HEK293 (cell line): ENCODE measurements at regions of chr6 and their contacts with region 1.

Region 1: GRCh38 chr6:30616811-30617564 is at the start of gene PPP1R10:
- H3K4me3 ChIP-seq: peak within 1 kb of the TSS; percentile 91
- H3K27ac ChIP-seq: peak within 1 kb of the TSS; percentile 88
- H3K4me1 ChIP-seq: peaks cover 18% of the 10 kb centered on the region
- CTCF ChIP-seq: 0 out of 2 replicates have a peak, but pooled peaks have one; percentile 17

Region 2: DNA sequence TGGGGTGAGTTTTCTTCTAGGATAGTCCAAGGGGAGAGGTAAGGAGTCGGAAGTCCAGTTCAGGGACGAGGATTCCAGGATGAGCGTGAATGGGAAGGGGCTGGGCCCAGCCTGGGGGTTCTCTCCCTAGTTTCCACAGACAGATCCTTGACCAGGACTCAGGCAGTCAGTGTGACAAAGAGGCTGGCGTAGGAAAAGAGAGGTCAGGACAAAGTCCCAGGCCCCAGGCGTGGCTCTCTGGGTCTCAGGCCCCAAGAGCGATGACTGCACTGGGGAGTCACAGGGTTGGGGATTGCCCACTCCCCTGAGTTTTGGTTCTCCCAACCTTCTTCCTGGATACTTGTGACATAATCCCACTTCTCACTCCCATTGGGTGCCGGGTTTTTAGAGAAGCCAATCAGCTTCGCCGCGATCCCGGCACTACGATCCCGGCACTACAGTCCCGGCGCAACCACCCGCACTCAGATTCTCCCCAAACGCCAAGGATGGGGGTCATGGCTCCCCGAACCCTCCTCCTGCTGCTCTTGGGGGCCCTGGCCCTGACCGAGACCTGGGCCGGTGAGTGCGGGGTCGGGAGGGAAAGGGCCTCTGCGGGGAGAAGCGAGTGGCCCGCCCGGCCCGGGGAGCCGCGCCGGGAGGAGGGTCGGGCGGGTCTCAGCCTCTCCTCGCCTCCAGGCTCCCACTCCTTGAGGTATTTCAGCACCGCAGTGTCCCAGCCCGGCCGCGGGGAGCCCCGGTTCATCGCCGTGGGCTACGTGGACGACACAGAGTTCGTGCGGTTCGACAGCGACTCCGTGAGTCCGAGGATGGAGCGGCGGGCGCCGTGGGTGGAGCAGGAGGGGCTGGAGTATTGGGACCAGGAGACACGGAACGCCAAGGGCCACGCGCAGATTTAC is 357.6 kb before region 1 on chr6:
- CTCF ChIA-PET with region 1: no interaction called
- POLR2A ChIA-PET with region 1: no interaction called
- H3K4me3 ChIP-seq: peak overlapping the region; percentile 79
- H3K27ac ChIP-seq: peak overlapping the region; percentile 25; the same call in 1 of the 2 replicates
- H3K4me1 ChIP-seq: peaks cover 8% of the 10 kb centered on the region; the same call in 1 of the 2 replicates
- CTCF ChIP-seq: peak; percentile 85

Region 3: GRCh38 chr6:30447237-30447636 is 169.8 kb before region 1 on chr6:
- CTCF ChIA-PET with region 1: no interaction called
- POLR2A ChIA-PET with region 1: no interaction called
- H3K4me3 ChIP-seq: no peak overlapping the region
- H3K27ac ChIP-seq: no peak overlapping the region
- H3K4me1 ChIP-seq: 0 out of 2 replicates have a peak, but pooled peaks cover 3% of the 10 kb centered on the region
- CTCF ChIP-seq: peak; percentile 34

Region 4: DNA sequence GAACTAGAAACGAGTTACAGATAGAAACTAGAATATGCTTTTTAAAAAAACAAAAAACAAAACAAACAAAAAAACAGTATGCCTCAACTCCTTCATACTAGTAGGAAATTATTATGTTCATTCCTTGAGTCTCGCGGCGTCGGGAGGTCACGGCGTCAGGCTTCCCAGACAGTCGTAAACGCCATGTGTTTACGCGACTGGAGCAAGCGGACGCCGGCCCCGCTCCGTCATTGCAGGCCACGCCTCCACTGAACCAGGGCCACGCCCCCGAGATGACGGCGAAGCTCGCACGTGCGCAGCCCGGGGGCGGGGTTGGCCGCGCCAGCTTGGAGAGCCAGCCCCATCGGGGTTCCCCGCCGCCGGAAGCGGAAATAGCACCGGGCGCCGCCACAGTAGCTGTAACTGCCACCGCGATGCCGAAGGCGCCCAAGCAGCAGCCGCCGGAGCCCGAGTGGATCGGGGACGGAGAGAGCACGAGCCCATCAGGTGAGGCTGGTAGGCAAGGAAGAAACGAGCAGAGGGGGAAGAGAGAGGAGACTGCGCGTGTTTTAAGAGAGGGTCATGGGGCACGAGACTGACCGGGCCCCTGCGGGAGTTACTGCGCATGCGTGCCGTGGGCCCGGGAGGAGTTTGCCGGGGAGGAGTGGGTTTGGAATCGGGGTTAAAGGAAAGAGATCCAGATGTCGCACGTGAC is 45.8 kb before region 1 on chr6 and contains the start of gene ABCF1:
- CTCF ChIA-PET with region 1: no interaction called
- POLR2A ChIA-PET with region 1: interaction called, 23 read pairs
- H3K4me3 ChIP-seq: peak within 1 kb of the TSS; percentile 94
- H3K27ac ChIP-seq: peak within 1 kb of the TSS; percentile 64
- H3K4me1 ChIP-seq: peaks cover 9% of the 10 kb centered on the region; the same call in 1 of the 2 replicates
- CTCF ChIP-seq: no peak

Region 5: DNA sequence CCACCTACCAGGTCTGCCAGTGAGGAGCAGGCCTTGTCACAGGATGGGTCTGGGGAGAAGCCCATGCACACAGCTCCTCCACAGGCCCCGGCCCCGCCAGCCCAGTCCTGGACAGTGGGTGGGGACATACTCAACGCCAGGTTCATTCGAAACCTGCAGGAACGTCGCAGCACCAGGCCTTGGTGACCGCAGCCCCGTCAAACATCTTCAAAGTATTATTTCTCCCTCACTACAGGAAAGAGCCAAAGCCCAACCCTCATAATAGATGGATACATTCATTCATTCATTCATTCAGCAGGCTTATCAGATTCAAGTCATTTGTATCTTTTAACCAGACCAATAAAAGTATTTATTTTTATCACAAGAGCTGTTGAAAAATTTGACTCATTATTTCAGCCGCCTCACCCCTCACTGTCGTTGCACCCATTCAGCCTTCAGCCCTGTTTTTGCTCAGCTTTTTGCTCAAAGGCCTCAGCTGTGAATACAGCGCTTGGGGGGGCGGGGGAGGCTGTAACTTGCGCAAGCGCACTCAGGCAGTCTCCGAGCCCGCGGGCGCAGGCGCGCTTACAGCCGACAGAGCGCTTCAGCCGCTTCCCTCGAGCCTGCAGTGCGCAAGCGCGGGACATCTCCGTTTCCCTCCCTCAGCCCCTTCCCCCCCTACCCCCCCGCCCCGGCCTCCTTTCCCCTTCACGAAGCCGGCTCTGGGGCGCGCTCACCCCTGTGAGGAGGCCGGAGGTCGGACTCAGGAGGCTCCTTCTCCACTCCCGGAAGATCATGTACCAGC is 29.7 kb after region 1 on chr6 and contains the start of gene C6orf136:
- CTCF ChIA-PET with region 1: interaction called, 3 read pairs
- POLR2A ChIA-PET with region 1: interaction called, 20 read pairs
- H3K4me3 ChIP-seq: peak within 1 kb of the TSS; percentile 88
- H3K27ac ChIP-seq: peak within 1 kb of the TSS; percentile 96
- H3K4me1 ChIP-seq: peaks cover 8% of the 10 kb centered on the region
- CTCF ChIP-seq: no peak

Region 6: GRCh38 chr6:30717042-30717844 is 100.3 kb after region 1 on chr6 and contains the start of gene MDC1:
- CTCF ChIA-PET with region 1: interaction called, 16 read pairs
- POLR2A ChIA-PET with region 1: interaction called, 51 read pairs
- H3K4me3 ChIP-seq: peak within 1 kb of the TSS; percentile 72
- H3K27ac ChIP-seq: peak within 1 kb of the TSS; percentile 88
- H3K4me1 ChIP-seq: peaks cover 6% of the 10 kb centered on the region
- CTCF ChIP-seq: peak; percentile 86

Region 7: GRCh38 chr6:30790760-30791271 is 173.8 kb after region 1 on chr6:
- CTCF ChIA-PET with region 1: no interaction called
- POLR2A ChIA-PET with region 1: no interaction called
- H3K4me3 ChIP-seq: no peak overlapping the region
- H3K27ac ChIP-seq: no peak overlapping the region
- H3K4me1 ChIP-seq: no peaks in the 10 kb centered on the region
- CTCF ChIP-seq: no peak

Region 8: DNA sequence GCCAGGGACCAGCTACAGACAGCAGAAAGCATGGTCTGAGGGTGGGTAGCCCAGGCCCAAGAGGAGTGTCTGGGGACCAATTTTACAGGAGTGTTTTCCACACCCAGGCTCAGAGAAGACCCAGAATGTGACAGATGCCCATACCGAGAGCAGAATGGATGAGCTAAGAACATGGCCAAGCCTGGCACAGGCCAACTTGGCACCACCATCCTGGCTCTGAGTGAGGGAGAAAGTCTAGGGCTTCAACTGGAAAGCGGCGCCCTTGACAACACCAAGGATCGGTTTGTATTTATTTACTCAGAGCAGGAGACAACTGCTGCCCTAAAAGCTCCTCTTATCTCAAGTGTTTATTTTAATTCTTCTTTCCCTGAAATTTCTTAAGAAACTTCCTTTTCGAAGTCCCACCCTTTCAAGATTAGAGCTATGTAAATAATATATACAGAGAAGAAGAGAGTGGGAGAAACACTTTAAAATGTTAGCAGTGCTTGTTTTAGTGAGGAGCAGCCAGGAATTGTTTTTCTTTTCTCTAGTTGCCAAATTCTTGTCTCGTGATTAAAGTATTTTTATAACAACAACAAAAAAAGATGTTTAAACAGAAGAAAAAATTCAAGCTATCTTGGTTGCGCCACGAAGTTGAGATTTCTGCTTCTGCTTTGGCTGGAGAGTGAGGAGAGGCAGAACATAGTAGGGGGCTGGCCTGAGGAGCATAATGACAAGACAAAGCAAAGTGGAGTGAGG is 1475.9 kb after region 1 on chr6:
- CTCF ChIA-PET with region 1: no interaction called
- POLR2A ChIA-PET with region 1: interaction called, 11 read pairs
- H3K4me3 ChIP-seq: no peak overlapping the region
- H3K27ac ChIP-seq: no peak overlapping the region
- H3K4me1 ChIP-seq: peaks cover 11% of the 10 kb centered on the region
- CTCF ChIP-seq: no peak